Heart left ventricle (tissue), 16 donors: ENCODE measurements at regions of chr4 and their contacts with region 1.

Region 1: GRCh38 chr4:89410687-89411086 is 103.1 kb upstream of the GPRIN3 start:
- DNase-seq: no peak
- ATAC-seq: peak in 1 of 4 donors; percentile 50
- H3K4me3 ChIP-seq: no peak overlapping the region
- H3K27ac ChIP-seq: peak overlapping the region in 4 of 12 donors; percentile 3 to 53 (median 19)
- H3K4me1 ChIP-seq: peaks cover 0 to 33% (median 9%) of the 10 kb centered on the region in 12 donors
- H3K27me3 ChIP-seq: no peaks in the 10 kb centered on the region
- CTCF ChIP-seq: no peak
- POLR2A ChIP-seq: no peak

Region 2: DNA sequence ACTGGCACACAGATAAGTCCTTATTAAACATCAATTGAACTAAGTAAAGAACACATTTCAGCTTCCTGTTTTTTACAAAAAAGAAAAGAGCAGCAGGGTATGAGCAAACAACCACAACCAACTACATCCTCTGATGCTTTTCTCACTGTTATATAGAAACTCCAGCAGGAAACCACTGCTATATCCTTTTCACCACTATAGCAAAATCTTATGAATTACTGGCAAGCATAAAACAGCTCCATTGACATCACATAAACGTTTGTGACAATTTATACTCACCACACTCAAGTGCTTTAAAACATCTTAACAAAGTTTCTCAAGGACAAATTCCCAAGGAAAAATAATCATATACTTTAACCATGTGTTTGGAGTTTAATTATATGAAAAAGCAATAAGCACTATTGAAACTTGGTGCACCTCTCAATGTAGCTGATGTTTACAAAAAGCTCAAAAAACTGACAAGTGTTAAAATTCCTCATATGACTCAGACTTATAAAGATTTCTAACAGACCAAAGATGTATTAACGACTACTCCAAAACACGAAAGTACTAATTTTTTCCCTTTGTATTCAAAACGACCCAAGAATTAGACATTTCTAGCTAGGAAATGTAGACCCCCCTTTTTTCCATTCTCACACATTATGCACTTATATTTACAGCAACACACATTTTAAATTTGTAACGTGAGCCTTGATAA is 116.0 kb before region 1 on chr4:
- intact Hi-C with region 1: loop called in 3 of 10 experiments (anchors 5 to 10 kb)
- DNase-seq: no peak
- ATAC-seq: peak in 1 of 4 donors; percentile 30
- H3K4me3 ChIP-seq: no peak overlapping the region
- H3K27ac ChIP-seq: peak overlapping the region in 3 of 12 donors; percentile 47 to 92 (median 61)
- H3K4me1 ChIP-seq: peaks cover 3 to 97% (median 35%) of the 10 kb centered on the region in 12 donors
- H3K27me3 ChIP-seq: no peaks in the 10 kb centered on the region
- CTCF ChIP-seq: no peak
- POLR2A ChIP-seq: no peak

Region 3: GRCh38 chr4:89307446-89308160 is 103.1 kb before region 1 on chr4 and contains the start of gene GPRIN3:
- intact Hi-C with region 1: loop called in 1 of 10 experiments (anchors 5 kb)
- DNase-seq: peak; percentile 66 to 84 (median 66)
- ATAC-seq: peak; percentile 38 to 78 (median 68)
- H3K4me3 ChIP-seq: peak within 1 kb of the TSS; percentile 62 to 94 (median 80)
- H3K27ac ChIP-seq: peak within 1 kb of the TSS; percentile 70 to 92 (median 79)
- H3K4me1 ChIP-seq: peaks cover 0 to 47% (median 18%) of the 10 kb centered on the region in 12 donors
- H3K27me3 ChIP-seq: peaks cover 0 to 4% (median 0%) of the 10 kb centered on the region in 9 donors
- CTCF ChIP-seq: peak in 1 of 12 donors; percentile 9
- POLR2A ChIP-seq: no peak
- total RNA-seq, gene GPRIN3: 6.3 to 16.5 (median 13.8) TPM

Region 4: DNA sequence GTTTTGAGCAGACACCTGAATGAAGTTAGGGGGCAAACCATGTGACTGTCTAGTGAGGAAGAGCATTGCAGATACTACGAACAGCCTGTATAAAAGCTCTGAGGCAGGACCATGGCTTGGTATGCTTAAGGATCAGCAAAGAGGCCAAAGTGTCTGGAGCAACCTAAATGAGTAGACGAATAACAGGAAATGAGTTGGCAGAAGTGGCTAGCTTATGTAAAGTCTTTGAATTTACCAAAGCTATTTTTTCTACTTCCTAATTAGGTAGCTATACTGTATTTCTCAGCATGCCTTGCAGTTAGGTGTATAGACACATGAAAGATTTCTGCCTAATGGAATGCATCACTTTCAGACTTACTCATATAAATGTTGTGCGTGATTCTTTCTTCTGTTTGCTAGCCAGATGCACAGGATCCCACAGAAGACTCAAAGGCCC is 93.7 kb before region 1 on chr4:
- intact Hi-C with region 1: loop called in 2 of 10 experiments (anchors 5 to 10 kb)
- DNase-seq: no peak
- ATAC-seq: peak in 3 of 4 donors; percentile 22 to 46 (median 24)
- H3K4me3 ChIP-seq: no peak overlapping the region
- H3K27ac ChIP-seq: peak overlapping the region in 1 of 12 donors; percentile 76
- H3K4me1 ChIP-seq: peaks cover 0 to 34% (median 8%) of the 10 kb centered on the region in 12 donors
- H3K27me3 ChIP-seq: no peaks in the 10 kb centered on the region
- CTCF ChIP-seq: no peak
- POLR2A ChIP-seq: no peak

Region 5: DNA sequence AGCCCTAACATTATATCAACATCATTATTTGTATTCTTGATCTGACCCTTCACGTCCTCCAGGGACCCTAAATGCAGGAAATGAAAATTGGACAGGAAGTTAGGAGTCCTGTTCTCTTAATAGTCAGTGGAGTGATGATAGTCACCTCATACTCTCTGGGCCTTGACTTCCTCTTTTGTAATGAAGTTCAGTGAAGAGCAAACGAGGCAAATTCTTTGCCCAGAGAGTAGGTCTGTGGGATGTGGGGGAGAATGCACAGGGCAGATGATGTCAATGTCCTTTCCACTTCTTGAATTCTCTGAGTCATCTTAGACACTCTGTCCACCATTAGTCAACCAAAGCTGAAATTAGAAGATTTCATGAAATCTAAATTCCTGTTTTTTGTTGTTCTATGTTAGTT is 86.0 kb before region 1 on chr4:
- intact Hi-C with region 1: loop called in 2 of 10 experiments (anchors 5 to 10 kb)
- DNase-seq: peak in 2 of 5 donors; percentile 15 to 27
- ATAC-seq: peak in 3 of 4 donors; percentile 77 to 86 (median 79)
- H3K4me3 ChIP-seq: no peak overlapping the region
- H3K27ac ChIP-seq: peak overlapping the region in 2 of 12 donors; percentile 20 to 81
- H3K4me1 ChIP-seq: peaks cover 0 to 22% (median 0%) of the 10 kb centered on the region in 12 donors
- H3K27me3 ChIP-seq: no peaks in the 10 kb centered on the region
- CTCF ChIP-seq: no peak
- POLR2A ChIP-seq: no peak

Region 6: GRCh38 chr4:89371614-89372013 is 39.1 kb before region 1 on chr4:
- intact Hi-C with region 1: no loop called
- DNase-seq: no peak
- ATAC-seq: peak in 2 of 4 donors; percentile 45 to 61
- H3K4me3 ChIP-seq: no peak overlapping the region
- H3K27ac ChIP-seq: no peak overlapping the region
- H3K4me1 ChIP-seq: peaks cover 0 to 10% (median 0%) of the 10 kb centered on the region in 12 donors
- H3K27me3 ChIP-seq: no peaks in the 10 kb centered on the region
- CTCF ChIP-seq: no peak
- POLR2A ChIP-seq: no peak